ENCODE measurements at regions of chr13 and their contacts with region 1.

Region 1: DNA sequence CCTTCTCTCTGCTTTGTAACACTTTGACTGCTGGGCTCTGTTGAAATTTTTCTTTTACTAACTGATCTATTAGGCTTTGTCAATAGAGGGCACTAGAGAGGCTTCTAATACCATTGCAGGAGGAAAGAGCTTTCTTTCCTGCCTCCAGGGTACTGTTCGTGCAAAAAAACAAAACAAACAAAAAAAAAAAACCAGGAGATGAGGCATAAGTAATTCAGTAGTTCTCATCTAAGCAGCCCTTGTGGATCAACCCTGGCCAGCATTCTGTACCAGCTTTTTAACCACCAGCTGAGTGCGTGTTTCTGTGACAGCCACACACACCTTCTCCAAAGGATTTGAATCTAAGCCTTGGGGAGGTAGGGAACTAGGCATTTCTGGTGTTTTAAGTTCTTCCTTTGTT is 1707.6 kb upstream of the SLC10A2 start:
- DNase-seq: peak; percentile 4
- ATAC-seq: peak; percentile 72
- H3K4me3 ChIP-seq: no peak overlapping the region
- H3K27ac ChIP-seq: no peak overlapping the region
- H3K4me1 ChIP-seq: no peaks in the 10 kb centered on the region
- H3K27me3 ChIP-seq: no peaks in the 10 kb centered on the region
- CTCF ChIP-seq: peak; percentile 57 to 70 (median 65); a peak in 5 of 6 replicates
- EP300 ChIP-seq: no peak
- POLR2A ChIP-seq: no peak
- RAD21 ChIP-seq: peak; percentile 85

Region 2: GRCh38 chr13:104253063-104253680 is 520.6 kb before region 1 on chr13:
- CTCF ChIA-PET with region 1: no interaction called
- POLR2A ChIA-PET with region 1: no interaction called
- RAD21 ChIA-PET with region 1: no interaction called
- SMC1A ChIA-PET with region 1: no interaction called
- in situ Hi-C with region 1: no loop called
- intact Hi-C with region 1: no loop called
- DNase-seq: no peak
- ATAC-seq: no peak
- H3K4me3 ChIP-seq: no peak overlapping the region
- H3K27ac ChIP-seq: no peak overlapping the region
- H3K4me1 ChIP-seq: no peaks in the 10 kb centered on the region
- H3K27me3 ChIP-seq: no peaks in the 10 kb centered on the region
- CTCF ChIP-seq: no peak
- EP300 ChIP-seq: no peak
- POLR2A ChIP-seq: no peak
- RAD21 ChIP-seq: no peak

Region 3: GRCh38 chr13:104757712-104758111 is 16.1 kb before region 1 on chr13:
- CTCF ChIA-PET with region 1: interaction called, 13 read pairs
- POLR2A ChIA-PET with region 1: no interaction called
- RAD21 ChIA-PET with region 1: no interaction called
- SMC1A ChIA-PET with region 1: interaction called, 5 read pairs
- in situ Hi-C with region 1: no loop called
- intact Hi-C with region 1: no loop called
- DNase-seq: no peak
- ATAC-seq: no peak
- H3K4me3 ChIP-seq: no peak overlapping the region
- H3K27ac ChIP-seq: no peak overlapping the region
- H3K4me1 ChIP-seq: no peaks in the 10 kb centered on the region
- H3K27me3 ChIP-seq: no peaks in the 10 kb centered on the region
- CTCF ChIP-seq: no peak
- EP300 ChIP-seq: no peak
- POLR2A ChIP-seq: no peak
- RAD21 ChIP-seq: no peak

Region 4: GRCh38 chr13:104798486-104798885 is 24.7 kb after region 1 on chr13:
- CTCF ChIA-PET with region 1: interaction called, 6 read pairs
- POLR2A ChIA-PET with region 1: no interaction called
- RAD21 ChIA-PET with region 1: no interaction called
- SMC1A ChIA-PET with region 1: no interaction called
- in situ Hi-C with region 1: no loop called
- intact Hi-C with region 1: loop called (anchors 2 kb)
- DNase-seq: no peak
- ATAC-seq: no peak
- H3K4me3 ChIP-seq: no peak overlapping the region
- H3K27ac ChIP-seq: no peak overlapping the region
- H3K4me1 ChIP-seq: no peaks in the 10 kb centered on the region
- H3K27me3 ChIP-seq: no peaks in the 10 kb centered on the region; a peak in 1 of 4 replicates
- CTCF ChIP-seq: no peak
- EP300 ChIP-seq: no peak
- POLR2A ChIP-seq: no peak
- RAD21 ChIP-seq: no peak

Region 5: GRCh38 chr13:105202354-105202753 is 428.6 kb after region 1 on chr13:
- CTCF ChIA-PET with region 1: no interaction called
- POLR2A ChIA-PET with region 1: no interaction called
- RAD21 ChIA-PET with region 1: no interaction called
- SMC1A ChIA-PET with region 1: no interaction called
- in situ Hi-C with region 1: no loop called
- intact Hi-C with region 1: loop called (anchors 1 kb)
- DNase-seq: no peak
- ATAC-seq: peak; percentile 57
- H3K4me3 ChIP-seq: no peak overlapping the region
- H3K27ac ChIP-seq: no peak overlapping the region
- H3K4me1 ChIP-seq: no peaks in the 10 kb centered on the region
- H3K27me3 ChIP-seq: no peaks in the 10 kb centered on the region
- CTCF ChIP-seq: peak; percentile 38 to 54 (median 54); a peak in 5 of 6 replicates
- EP300 ChIP-seq: no peak
- POLR2A ChIP-seq: no peak
- RAD21 ChIP-seq: peak; percentile 76